Psoas muscle (tissue), 8 donors: ENCODE measurements at regions of chr2 and their contacts with region 1.

Region 1: GRCh38 chr2:201451292-201452057 is at the starts of genes STRADB and TRAK2:
- DNase-seq: peak; percentile 95 to 99
- ATAC-seq: peak; percentile 96 to 98 (median 98)
- H3K4me3 ChIP-seq: peak within 1 kb of the TSS; percentile 98
- H3K27ac ChIP-seq: peak within 1 kb of the TSS; percentile 94
- H3K4me1 ChIP-seq: peaks cover 39% of the 10 kb centered on the region
- H3K27me3 ChIP-seq: no peaks in the 10 kb centered on the region
- CTCF ChIP-seq: peak; percentile 39
- total RNA-seq, gene STRADB: 55.9 to 87.3 (median 81.2) TPM
- total RNA-seq, gene TRAK2: 17.6 to 53.0 (median 36.5) TPM

Region 2: GRCh38 chr2:201406077-201406662 is 45.3 kb before region 1 on chr2:
- intact Hi-C with region 1: loop called (anchors 2 to 5 kb)
- DNase-seq: no peak
- ATAC-seq: peak in 3 of 4 donors; percentile 28 to 71 (median 40)
- H3K4me3 ChIP-seq: peak overlapping the region; percentile 50
- H3K27ac ChIP-seq: peak overlapping the region; percentile 73
- H3K4me1 ChIP-seq: peaks cover 68% of the 10 kb centered on the region
- H3K27me3 ChIP-seq: no peaks in the 10 kb centered on the region
- CTCF ChIP-seq: no peak

Region 3: DNA sequence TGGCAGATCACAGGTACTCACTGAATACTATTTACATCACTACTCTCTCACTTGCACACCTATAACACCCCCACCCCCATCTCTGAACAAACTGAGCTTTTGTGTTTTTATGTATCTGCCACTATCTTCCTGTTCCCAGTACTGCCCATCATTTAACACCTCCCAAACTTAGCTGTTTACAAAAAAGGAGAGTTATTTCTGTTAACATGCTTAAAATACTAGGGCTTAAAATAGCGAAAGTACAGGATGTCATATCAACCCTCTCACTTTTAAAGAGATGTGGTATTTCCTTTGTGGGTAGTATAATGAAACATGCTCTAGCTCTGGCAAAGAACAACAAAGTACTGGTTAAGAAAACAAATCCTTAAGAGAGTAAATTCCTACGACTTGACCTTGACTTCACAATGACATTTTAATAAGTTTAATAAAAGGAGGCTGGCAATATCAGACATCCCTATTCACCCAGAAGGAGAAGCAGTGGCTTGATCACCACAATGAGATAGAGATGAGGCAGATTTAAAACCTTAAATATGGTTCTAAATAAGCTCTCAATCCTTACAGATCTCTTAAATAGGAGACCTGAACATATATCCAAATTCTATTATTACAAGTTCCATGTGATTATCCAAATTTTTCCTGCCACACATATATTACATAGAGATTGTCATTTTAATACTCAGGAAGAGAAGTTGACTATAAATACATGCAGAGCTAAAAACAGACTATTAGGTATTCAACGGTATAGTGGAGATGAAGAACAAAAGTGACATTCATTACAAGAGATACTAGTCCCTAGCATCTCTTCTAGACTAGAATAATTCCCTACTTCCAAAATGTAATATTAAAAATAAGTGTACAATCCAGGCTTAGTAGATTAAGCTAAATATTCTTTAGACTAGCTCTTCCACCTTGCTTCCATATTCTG is 37.1 kb before region 1 on chr2:
- intact Hi-C with region 1: loop called in 1 of 2 experiments (anchors 5 kb)
- DNase-seq: no peak
- ATAC-seq: peak in 2 of 4 donors; percentile 26 to 45
- H3K4me3 ChIP-seq: peak overlapping the region; percentile 37
- H3K27ac ChIP-seq: peak overlapping the region; percentile 56
- H3K4me1 ChIP-seq: peaks cover 50% of the 10 kb centered on the region
- H3K27me3 ChIP-seq: no peaks in the 10 kb centered on the region
- CTCF ChIP-seq: no peak

Region 4: DNA sequence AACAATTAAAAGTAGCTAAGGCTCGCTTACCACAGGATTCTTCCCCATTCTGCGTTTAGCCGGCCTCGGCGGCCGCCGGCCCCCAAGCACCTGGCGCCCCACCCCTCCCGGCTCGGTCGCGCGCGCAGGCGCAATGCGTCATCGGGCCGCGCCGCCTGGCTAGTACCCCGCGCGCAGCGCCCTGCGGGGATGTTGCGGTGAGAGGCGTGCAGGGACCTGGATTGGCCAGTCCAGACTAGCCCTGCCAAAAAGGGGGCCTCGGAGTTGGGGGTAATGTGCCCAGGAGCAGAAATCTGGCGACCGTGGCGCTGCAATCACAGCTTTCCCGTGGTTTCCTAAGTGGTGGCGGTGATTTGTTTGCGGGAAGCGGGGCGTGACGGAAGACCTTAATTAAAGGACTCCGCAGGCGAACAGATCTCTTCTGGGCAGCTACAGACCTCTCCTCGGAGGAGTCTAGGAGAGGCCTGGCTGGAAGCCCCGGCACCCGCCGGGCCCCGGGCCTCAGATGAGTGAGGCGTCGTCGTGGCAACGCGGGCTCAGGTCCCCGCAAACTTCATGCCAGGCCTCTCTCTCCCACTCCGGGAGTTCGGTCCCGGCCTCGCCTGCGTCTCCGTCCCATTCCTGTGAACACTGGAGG is 191.2 kb after region 1 on chr2:
- intact Hi-C with region 1: loop called in 1 of 2 experiments (anchors 10 kb)
- DNase-seq: peak; percentile 85 to 93
- ATAC-seq: peak; percentile 95 to 97 (median 96)
- H3K4me3 ChIP-seq: peak overlapping the region; percentile 93
- H3K27ac ChIP-seq: peak overlapping the region; percentile 94
- H3K4me1 ChIP-seq: peaks cover 14% of the 10 kb centered on the region
- H3K27me3 ChIP-seq: no peaks in the 10 kb centered on the region
- CTCF ChIP-seq: no peak

Region 5: GRCh38 chr2:203164311-203164935 is 1712.9 kb after region 1 on chr2:
- intact Hi-C with region 1: no loop called
- DNase-seq: no peak
- ATAC-seq: no peak
- H3K4me3 ChIP-seq: no peak overlapping the region
- H3K27ac ChIP-seq: no peak overlapping the region
- H3K4me1 ChIP-seq: no peaks in the 10 kb centered on the region
- H3K27me3 ChIP-seq: no peaks in the 10 kb centered on the region
- CTCF ChIP-seq: no peak